ENCODE measurements at regions of chr5 and their contacts with region 1.

Region 1: GRCh38 chr5:113147101-113147508 is 170.5 kb downstream of the DCP2 start:
- DNase-seq: peak; percentile 90
- H3K4me3 Mint-ChIP-seq: peak overlapping the region; percentile 2
- H3K27ac Mint-ChIP-seq: peak overlapping the region; percentile 49
- H3K4me1 Mint-ChIP-seq: peaks cover 26% of the 10 kb centered on the region
- H3K27me3 Mint-ChIP-seq: no peaks in the 10 kb centered on the region
- CTCF ChIP-seq: no peak

Region 2: DNA sequence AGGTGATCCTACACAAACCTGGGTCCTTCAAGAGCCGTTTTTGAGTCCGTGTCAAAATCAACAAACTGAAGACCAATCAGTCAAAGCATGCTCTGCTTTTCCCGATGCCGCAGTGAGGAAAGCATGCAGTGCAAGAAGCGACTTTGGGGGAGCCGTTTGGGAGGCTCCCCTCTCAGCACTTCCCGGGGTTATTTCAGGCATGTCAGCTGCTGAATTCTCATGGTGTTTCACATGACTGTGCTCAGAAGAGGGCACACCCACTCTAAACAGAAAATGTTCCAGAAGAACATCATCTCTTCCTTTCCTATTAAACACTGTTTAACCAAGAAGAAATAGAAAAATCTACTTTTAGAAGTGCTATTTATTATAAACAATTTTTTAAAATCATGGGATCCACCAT is 853.5 kb before region 1 on chr5:
- CTCF ChIA-PET with region 1: no interaction called
- POLR2A ChIA-PET with region 1: no interaction called
- intact Hi-C with region 1: no loop called
- DNase-seq: no peak
- H3K4me3 Mint-ChIP-seq: no peak overlapping the region
- H3K27ac Mint-ChIP-seq: no peak overlapping the region
- H3K4me1 Mint-ChIP-seq: peaks cover 7% of the 10 kb centered on the region
- H3K27me3 Mint-ChIP-seq: no peaks in the 10 kb centered on the region
- CTCF ChIP-seq: no peak

Region 3: GRCh38 chr5:113123618-113124017 is 23.5 kb before region 1 on chr5:
- CTCF ChIA-PET with region 1: interaction called, 7 read pairs
- POLR2A ChIA-PET with region 1: interaction called, 10 read pairs
- intact Hi-C with region 1: no loop called
- DNase-seq: peak; percentile 31
- H3K4me3 Mint-ChIP-seq: no peak overlapping the region
- H3K27ac Mint-ChIP-seq: no peak overlapping the region
- H3K4me1 Mint-ChIP-seq: no peaks in the 10 kb centered on the region
- H3K27me3 Mint-ChIP-seq: no peaks in the 10 kb centered on the region
- CTCF ChIP-seq: no peak

Region 4: DNA sequence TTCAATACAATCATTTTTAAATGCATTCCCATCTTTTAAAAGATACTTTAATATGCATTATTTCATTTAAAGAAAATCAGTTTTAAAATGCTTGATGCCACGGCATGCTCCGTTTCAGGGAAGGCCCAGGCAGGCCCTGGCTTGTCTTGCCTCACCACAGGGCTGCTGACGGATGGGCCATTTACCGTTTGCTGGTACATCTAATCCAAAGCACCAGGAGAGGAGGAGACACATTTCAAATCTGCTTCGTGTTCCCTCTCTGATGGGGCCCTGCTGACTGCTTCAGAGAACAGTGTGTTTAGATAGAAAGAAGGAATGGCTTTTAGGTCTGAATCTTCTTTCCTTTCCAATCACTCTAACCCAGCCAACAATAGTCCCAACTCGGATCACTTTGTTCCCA is 14.7 kb after region 1 on chr5:
- CTCF ChIA-PET with region 1: interaction called, 18 read pairs
- POLR2A ChIA-PET with region 1: interaction called, 9 read pairs
- intact Hi-C with region 1: no loop called
- DNase-seq: peak; percentile 86
- H3K4me3 Mint-ChIP-seq: no peak overlapping the region
- H3K27ac Mint-ChIP-seq: peak overlapping the region; percentile 96
- H3K4me1 Mint-ChIP-seq: peaks cover 56% of the 10 kb centered on the region
- H3K27me3 Mint-ChIP-seq: no peaks in the 10 kb centered on the region
- CTCF ChIP-seq: no peak

Region 5: GRCh38 chr5:113264042-113264441 is 116.9 kb after region 1 on chr5:
- CTCF ChIA-PET with region 1: no interaction called
- POLR2A ChIA-PET with region 1: interaction called, 11 read pairs
- intact Hi-C with region 1: no loop called
- DNase-seq: peak; percentile 86
- H3K4me3 Mint-ChIP-seq: no peak overlapping the region
- H3K27ac Mint-ChIP-seq: peak overlapping the region; percentile 63
- H3K4me1 Mint-ChIP-seq: peaks cover 42% of the 10 kb centered on the region
- H3K27me3 Mint-ChIP-seq: no peaks in the 10 kb centered on the region
- CTCF ChIP-seq: no peak